ENCODE measurements at regions of chr4 and their contacts with region 1.

Region 1: GRCh38 chr4:15729910-15730533 is 27.2 kb downstream of the BST1 start:
- DNase-seq: peak; percentile 8 to 54
- H3K4me3 ChIP-seq: no peak overlapping the region
- H3K27ac ChIP-seq: no peak overlapping the region
- H3K4me1 ChIP-seq: no peaks in the 10 kb centered on the region
- H3K27me3 ChIP-seq: no peaks in the 10 kb centered on the region
- CTCF ChIP-seq: peak; percentile 86

Region 2: GRCh38 chr4:15681207-15682015 is 48.6 kb before region 1 on chr4 and contains the start of gene FAM200B:
- CTCF ChIA-PET with region 1: no interaction called
- POLR2A ChIA-PET with region 1: interaction called, 11 read pairs
- intact Hi-C with region 1: no loop called
- DNase-seq: peak; percentile 93 to 100
- H3K4me3 ChIP-seq: peak within 1 kb of the TSS; percentile 79
- H3K27ac ChIP-seq: peak within 1 kb of the TSS; percentile 87
- H3K4me1 ChIP-seq: peaks cover 47% of the 10 kb centered on the region
- H3K27me3 ChIP-seq: no peaks in the 10 kb centered on the region
- CTCF ChIP-seq: no peak
- total RNA-seq, gene FAM200B: 20.5 and 32.4 TPM in 2 replicates

Region 3: GRCh38 chr4:15690020-15690809 is 39.8 kb before region 1 on chr4:
- CTCF ChIA-PET with region 1: no interaction called
- POLR2A ChIA-PET with region 1: no interaction called
- intact Hi-C with region 1: loop called (anchors 5 kb)
- DNase-seq: peak; percentile 47 to 88
- H3K4me3 ChIP-seq: no peak overlapping the region
- H3K27ac ChIP-seq: peak overlapping the region; percentile 82
- H3K4me1 ChIP-seq: peaks cover 37% of the 10 kb centered on the region
- H3K27me3 ChIP-seq: no peaks in the 10 kb centered on the region
- CTCF ChIP-seq: no peak

Region 4: DNA sequence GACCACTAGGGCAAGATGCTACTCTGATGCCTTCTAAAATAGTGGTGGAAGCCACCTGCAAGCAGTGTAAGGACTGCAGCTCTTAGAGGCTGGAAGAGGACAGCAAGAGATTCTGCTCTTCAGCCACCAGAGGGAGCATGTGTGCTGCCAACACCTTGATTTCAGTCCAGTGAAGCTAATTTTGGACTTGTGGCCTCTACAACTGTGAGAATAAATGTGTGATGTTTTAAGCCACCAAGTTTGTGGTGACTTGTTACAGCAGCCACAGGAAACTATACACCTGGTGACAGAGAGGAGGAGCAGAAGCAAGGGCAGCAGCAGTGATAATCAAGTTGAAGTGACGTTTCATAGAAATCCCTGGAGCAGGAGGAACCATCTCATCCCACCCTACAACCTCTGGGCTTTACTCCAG is 152.7 kb after region 1 on chr4:
- CTCF ChIA-PET with region 1: no interaction called
- POLR2A ChIA-PET with region 1: no interaction called
- intact Hi-C with region 1: loop called (anchors 5 kb)
- DNase-seq: peak; percentile 51 to 82
- H3K4me3 ChIP-seq: no peak overlapping the region
- H3K27ac ChIP-seq: 0 out of 2 replicates have a peak overlapping the region, but pooled peaks have one; percentile 7
- H3K4me1 ChIP-seq: no peaks in the 10 kb centered on the region
- H3K27me3 ChIP-seq: no peaks in the 10 kb centered on the region
- CTCF ChIP-seq: peak; percentile 93

Region 5: GRCh38 chr4:15956179-15956850 is 226.3 kb after region 1 on chr4:
- CTCF ChIA-PET with region 1: no interaction called
- POLR2A ChIA-PET with region 1: no interaction called
- intact Hi-C with region 1: loop called (anchors 2 kb)
- DNase-seq: peak; percentile 66 to 73
- H3K4me3 ChIP-seq: no peak overlapping the region
- H3K27ac ChIP-seq: no peak overlapping the region
- H3K4me1 ChIP-seq: peaks cover 5% of the 10 kb centered on the region; the same call in 1 of the 2 replicates
- H3K27me3 ChIP-seq: no peaks in the 10 kb centered on the region
- CTCF ChIP-seq: peak; percentile 93

Region 6: DNA sequence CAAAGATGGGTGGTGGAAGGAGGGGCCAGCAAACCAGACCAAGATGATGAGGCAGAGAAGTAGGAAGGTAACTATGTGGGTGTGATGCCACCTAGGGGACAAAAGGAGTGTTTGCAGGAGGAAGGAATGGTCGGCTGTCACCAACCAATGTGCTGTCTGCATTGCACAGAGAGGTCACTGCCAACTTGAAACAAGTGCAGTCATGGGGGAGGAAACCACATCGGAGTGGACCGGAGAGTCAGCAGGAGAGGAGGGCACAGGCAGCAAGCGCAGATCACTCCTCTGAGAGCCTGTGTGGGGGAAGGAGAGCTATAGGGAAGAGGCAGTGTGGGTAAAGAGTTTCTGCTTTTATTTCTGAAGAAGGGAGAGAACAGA is 271.4 kb after region 1 on chr4:
- CTCF ChIA-PET with region 1: no interaction called
- POLR2A ChIA-PET with region 1: no interaction called
- intact Hi-C with region 1: loop called (anchors 1 kb)
- DNase-seq: peak; percentile 51 to 65
- H3K4me3 ChIP-seq: no peak overlapping the region
- H3K27ac ChIP-seq: no peak overlapping the region
- H3K4me1 ChIP-seq: no peaks in the 10 kb centered on the region
- H3K27me3 ChIP-seq: no peaks in the 10 kb centered on the region
- CTCF ChIP-seq: peak; percentile 86